ENCODE measurements at regions of chr4 and their contacts with region 1.

Region 1: DNA sequence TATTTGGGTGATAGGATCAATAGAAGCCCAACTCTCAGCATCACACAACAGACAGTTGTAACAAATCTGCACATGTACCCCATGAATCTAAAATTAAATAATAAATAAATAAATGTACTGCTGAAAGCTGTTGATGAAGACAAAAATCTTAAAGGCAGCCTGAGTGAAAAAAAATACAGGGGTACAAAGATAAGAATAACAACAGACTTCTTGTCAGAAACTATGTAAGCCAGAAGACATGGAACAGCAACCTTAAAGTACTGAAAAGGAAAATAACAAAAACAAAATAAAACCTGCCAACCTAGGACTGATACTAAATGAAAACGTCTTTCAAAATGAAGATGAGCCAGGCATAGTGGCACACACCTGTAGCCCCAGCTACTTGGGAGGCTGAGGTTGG is 25.0 kb upstream of the PDLIM5 start:
- DNase-seq: no peak
- H3K4me3 ChIP-seq: no peak overlapping the region
- H3K27ac ChIP-seq: no peak overlapping the region
- H3K4me1 ChIP-seq: no peaks in the 10 kb centered on the region
- H3K27me3 ChIP-seq: no peaks in the 10 kb centered on the region
- CTCF ChIP-seq: no peak

Region 2: GRCh38 chr4:94416335-94416734 is 10.4 kb before region 1 on chr4:
- intact Hi-C with region 1: loop called (anchors 1 kb)
- DNase-seq: no peak
- H3K4me3 ChIP-seq: no peak overlapping the region
- H3K27ac ChIP-seq: no peak overlapping the region
- H3K4me1 ChIP-seq: peaks cover 0 to 50% (median 25%) of the 10 kb centered on the region in 4 donors
- H3K27me3 ChIP-seq: no peaks in the 10 kb centered on the region
- CTCF ChIP-seq: no peak

Measured in tibial artery (tissue), 4 donors.